Activated naive CD4-positive, alpha-beta T cell treated with anti-CD3 and anti-CD28 coated beads for 36 hours (primary cell): ENCODE measurements at regions of chr5 and their contacts with region 1.

Region 1: DNA sequence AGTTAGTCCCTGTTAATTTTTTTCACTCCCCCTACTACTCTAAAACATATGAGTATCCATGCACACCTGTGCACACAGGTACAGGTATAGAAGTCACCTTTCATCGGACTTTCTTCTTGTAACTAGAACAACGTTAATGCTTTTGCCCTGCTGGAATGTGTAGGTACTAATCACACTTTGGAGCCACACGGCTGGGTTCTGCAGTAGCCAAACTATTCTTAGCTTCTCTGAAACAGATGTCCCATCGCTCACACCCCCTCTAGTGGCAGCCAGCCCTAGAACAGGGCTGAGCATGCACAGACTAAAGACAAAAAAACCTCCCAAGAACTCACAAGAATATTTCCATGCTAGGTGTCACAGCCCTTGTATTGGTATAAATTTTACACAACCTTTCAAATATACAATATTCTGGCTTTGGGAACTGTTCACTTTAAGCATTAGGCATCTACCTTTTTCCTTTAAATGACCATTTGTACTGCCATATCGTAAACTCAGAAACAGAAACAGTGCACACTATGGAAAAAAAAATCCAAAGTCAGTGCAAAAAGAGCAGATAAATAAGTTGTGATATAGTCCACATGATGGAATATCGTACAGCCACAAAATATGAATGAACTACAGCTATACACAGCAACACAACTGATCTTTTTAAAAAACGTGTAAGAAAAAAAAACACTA is 64.0 kb downstream of the RETREG1 start:
- DNase-seq: peak; percentile 83
- H3K4me3 Mint-ChIP-seq: no peak overlapping the region
- H3K27ac Mint-ChIP-seq: no peak overlapping the region
- H3K4me1 Mint-ChIP-seq: peaks cover 41% of the 10 kb centered on the region
- H3K27me3 Mint-ChIP-seq: no peaks in the 10 kb centered on the region

Region 2: DNA sequence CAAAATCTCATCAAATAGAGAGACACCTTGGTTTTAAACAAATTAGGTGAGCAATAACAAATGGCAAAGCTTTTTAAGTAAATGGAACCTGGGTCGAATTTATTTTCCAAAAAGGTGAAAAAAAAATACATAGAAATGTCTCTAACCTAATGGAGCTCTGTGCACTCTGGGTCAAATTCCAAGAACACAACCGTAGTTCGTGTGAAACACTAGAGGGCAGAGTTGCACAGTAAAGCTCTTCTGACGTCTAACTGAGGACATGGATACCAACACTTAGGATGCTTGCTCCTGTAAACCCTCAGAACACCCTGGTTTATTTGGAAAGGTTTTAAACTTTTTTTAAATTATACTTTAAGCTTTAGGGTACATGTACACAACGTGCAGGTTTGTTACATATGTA is 392.1 kb before region 1 on chr5:
- CTCF ChIA-PET with region 1: interaction called, 6 read pairs
- intact Hi-C with region 1: loop called (anchors 1 kb)
- DNase-seq: peak; percentile 45
- H3K4me3 Mint-ChIP-seq: no peak overlapping the region
- H3K27ac Mint-ChIP-seq: no peak overlapping the region
- H3K4me1 Mint-ChIP-seq: no peaks in the 10 kb centered on the region
- H3K27me3 Mint-ChIP-seq: peaks cover 2% of the 10 kb centered on the region

Region 3: GRCh38 chr5:16326137-16326536 is 226.7 kb before region 1 on chr5:
- CTCF ChIA-PET with region 1: no interaction called
- intact Hi-C with region 1: loop called (anchors 2 kb)
- DNase-seq: no peak
- H3K4me3 Mint-ChIP-seq: no peak overlapping the region
- H3K27ac Mint-ChIP-seq: no peak overlapping the region
- H3K4me1 Mint-ChIP-seq: no peaks in the 10 kb centered on the region
- H3K27me3 Mint-ChIP-seq: peaks cover 15% of the 10 kb centered on the region

Region 4: GRCh38 chr5:16456103-16456832 is 96.5 kb before region 1 on chr5:
- CTCF ChIA-PET with region 1: interaction called, 8 read pairs
- intact Hi-C with region 1: loop called (anchors 2 kb)
- DNase-seq: peak; percentile 61
- H3K4me3 Mint-ChIP-seq: peak overlapping the region; percentile 46
- H3K27ac Mint-ChIP-seq: peak overlapping the region; percentile 91
- H3K4me1 Mint-ChIP-seq: peaks cover 51% of the 10 kb centered on the region
- H3K27me3 Mint-ChIP-seq: no peaks in the 10 kb centered on the region

Region 5: DNA sequence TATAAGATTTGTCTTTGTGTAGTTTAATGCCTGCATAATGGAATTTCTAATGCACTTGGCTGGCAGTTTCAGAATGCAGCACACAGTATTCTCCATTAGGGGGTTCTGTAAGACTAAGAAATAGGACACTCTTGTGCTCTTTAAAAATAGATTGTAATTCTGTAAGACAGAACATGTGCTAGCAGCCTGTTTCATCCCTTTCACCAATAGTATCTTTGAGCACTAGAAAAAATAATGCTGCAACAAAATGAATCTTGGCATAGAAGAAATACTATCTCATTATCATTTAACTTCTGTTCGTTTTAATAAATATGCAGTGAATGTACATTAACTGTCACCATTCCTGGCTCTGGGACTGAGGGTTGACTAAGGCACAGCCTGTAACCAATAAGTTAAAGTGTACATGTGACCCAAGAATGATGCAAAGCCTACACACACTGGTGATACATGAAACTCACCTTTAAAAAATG is 63.4 kb before region 1 on chr5:
- CTCF ChIA-PET with region 1: interaction called, 18 read pairs
- intact Hi-C with region 1: loop called (anchors 1 kb)
- DNase-seq: no peak
- H3K4me3 Mint-ChIP-seq: no peak overlapping the region
- H3K27ac Mint-ChIP-seq: no peak overlapping the region
- H3K4me1 Mint-ChIP-seq: peaks cover 15% of the 10 kb centered on the region
- H3K27me3 Mint-ChIP-seq: no peaks in the 10 kb centered on the region

Region 6: GRCh38 chr5:16666883-16667398 is 114.1 kb after region 1 on chr5:
- CTCF ChIA-PET with region 1: interaction called, 8 read pairs
- intact Hi-C with region 1: loop called (anchors 1 kb)
- DNase-seq: peak; percentile 53
- H3K4me3 Mint-ChIP-seq: no peak overlapping the region
- H3K27ac Mint-ChIP-seq: no peak overlapping the region
- H3K4me1 Mint-ChIP-seq: no peaks in the 10 kb centered on the region
- H3K27me3 Mint-ChIP-seq: no peaks in the 10 kb centered on the region